ENCODE measurements at regions of chr1 and their contacts with region 1.

Region 1: DNA sequence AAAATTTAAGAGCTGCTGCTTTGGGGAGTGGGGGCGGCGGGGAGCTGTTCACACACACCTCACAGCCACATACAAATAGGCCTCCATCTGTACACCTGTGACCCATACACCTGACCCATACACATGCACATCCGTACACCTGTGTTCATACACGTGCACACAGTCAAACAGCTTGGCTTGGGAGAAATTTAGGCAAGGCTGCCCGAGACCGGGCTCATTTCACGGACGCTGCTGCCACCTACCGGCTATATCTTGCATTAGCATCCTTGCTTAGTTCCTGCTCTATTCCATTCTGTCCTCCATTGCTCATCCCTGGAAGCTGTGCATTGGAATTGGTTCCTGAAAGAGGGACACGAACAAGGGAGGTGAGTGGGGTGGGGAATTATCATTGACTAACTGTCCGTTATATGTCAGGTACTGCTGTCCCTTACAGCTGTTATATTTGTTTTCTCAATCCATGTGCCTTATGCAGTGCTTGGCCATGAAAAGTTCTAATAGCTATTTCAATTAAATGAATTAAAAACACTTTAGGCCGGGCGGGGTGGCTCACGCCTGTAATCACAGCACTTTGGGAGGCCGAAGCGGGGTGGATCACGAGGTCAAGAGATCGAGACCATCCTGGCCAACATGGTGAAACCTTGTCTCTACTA is 37.1 kb upstream of the EPB41 start:
- DNase-seq: peak; percentile 68 to 73
- ATAC-seq: peak; percentile 70 to 86 (median 84)
- H3K4me3 ChIP-seq: no peak overlapping the region
- H3K27ac ChIP-seq: no peak overlapping the region
- H3K4me1 ChIP-seq: peaks cover 0 to 5% (median 0%) of the 10 kb centered on the region in 9 donors
- H3K27me3 ChIP-seq: peaks cover 0 to 25% (median 7%) of the 10 kb centered on the region in 7 donors
- CTCF ChIP-seq: peak; percentile 87 to 95 (median 93)

Region 2: GRCh38 chr1:28359592-28360239 is 517.5 kb before region 1 on chr1:
- intact Hi-C with region 1: loop called in 3 of 10 experiments (anchors 5 kb)
- DNase-seq: peak; percentile 54 to 65
- ATAC-seq: peak in 2 of 8 donors; percentile 58 to 67
- H3K4me3 ChIP-seq: no peak overlapping the region
- H3K27ac ChIP-seq: no peak overlapping the region
- H3K4me1 ChIP-seq: peaks cover 0 to 5% (median 0%) of the 10 kb centered on the region in 9 donors
- H3K27me3 ChIP-seq: no peaks in the 10 kb centered on the region
- CTCF ChIP-seq: peak; percentile 42 to 79 (median 74)

Region 3: GRCh38 chr1:28779751-28780408 is 97.4 kb before region 1 on chr1:
- intact Hi-C with region 1: loop called in 7 of 10 experiments (anchors 1 to 2 kb)
- DNase-seq: no peak
- ATAC-seq: no peak
- H3K4me3 ChIP-seq: no peak overlapping the region
- H3K27ac ChIP-seq: no peak overlapping the region
- H3K4me1 ChIP-seq: peaks cover 0 to 13% (median 7%) of the 10 kb centered on the region in 9 donors
- H3K27me3 ChIP-seq: no peaks in the 10 kb centered on the region
- CTCF ChIP-seq: no peak

Region 4: GRCh38 chr1:28796352-28797211 is 80.7 kb before region 1 on chr1:
- intact Hi-C with region 1: no loop called
- DNase-seq: peak in 1 of 2 donors; percentile 6
- ATAC-seq: peak in 2 of 8 donors; percentile 35 to 68
- H3K4me3 ChIP-seq: no peak overlapping the region
- H3K27ac ChIP-seq: no peak overlapping the region
- H3K4me1 ChIP-seq: peaks cover 0 to 11% (median 0%) of the 10 kb centered on the region in 9 donors
- H3K27me3 ChIP-seq: peaks cover 0 to 10% (median 0%) of the 10 kb centered on the region in 7 donors
- CTCF ChIP-seq: peak in 1 of 9 donors; percentile 24